ENCODE measurements at regions of chr19 and their contacts with region 1.

Region 1: GRCh38 chr19:41426952-41427646 is at the start of gene B3GNT8:
- DNase-seq: peak; percentile 88
- H3K4me3 ChIP-seq: peak within 1 kb of the TSS; percentile 47
- H3K4me3 Mint-ChIP-seq: peak within 1 kb of the TSS; percentile 72
- H3K27ac Mint-ChIP-seq: peak within 1 kb of the TSS; percentile 81
- H3K4me1 ChIP-seq: peaks cover 13% of the 10 kb centered on the region; the same call in 1 of the 2 replicates
- H3K4me1 Mint-ChIP-seq: peaks cover 19% of the 10 kb centered on the region
- H3K27me3 ChIP-seq: no peaks in the 10 kb centered on the region
- H3K27me3 Mint-ChIP-seq: no peaks in the 10 kb centered on the region
- CTCF ChIP-seq: no peak
- total RNA-seq, gene B3GNT8: 3.1 and 3.7 TPM in 2 replicates

Region 2: DNA sequence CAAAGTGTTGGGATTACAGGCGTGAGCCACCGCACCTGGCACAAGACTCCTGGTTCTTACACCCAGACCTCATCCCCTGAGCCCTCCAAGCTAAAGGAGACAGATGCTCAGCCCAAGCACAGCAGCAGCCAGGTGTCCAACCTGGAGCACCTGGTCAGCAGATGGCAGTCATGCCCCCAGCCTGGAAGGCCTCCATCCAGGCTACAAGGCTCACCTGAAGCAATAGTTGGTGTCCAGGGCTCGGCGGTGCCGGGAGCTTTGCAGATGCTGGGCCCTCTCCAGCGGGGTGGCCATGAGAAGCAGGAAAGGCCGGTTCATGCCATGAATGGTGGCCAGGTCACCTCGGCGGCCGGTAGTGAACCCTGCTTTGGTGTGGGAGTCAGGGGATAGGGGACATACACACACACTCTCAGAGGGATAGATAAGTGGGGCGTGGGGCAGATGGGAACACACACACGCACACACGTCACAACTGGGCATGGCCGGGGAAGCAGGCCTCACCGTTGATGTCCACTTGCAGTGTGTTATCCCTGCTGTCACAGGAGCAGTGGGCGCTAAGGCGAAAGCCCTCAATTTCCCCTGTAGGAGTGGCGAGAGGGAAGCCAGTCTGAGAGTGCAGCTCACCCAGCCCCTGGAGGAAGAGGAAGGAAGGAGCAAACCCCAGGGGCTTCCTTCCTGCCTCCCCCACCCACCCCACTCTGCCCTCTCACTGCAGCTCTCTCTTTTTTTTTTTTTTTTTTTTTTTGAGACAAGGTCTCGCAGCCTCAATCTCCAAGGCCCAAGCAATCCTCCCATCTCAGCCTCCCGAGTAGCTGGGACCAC is 85.2 kb before region 1 on chr19:
- CTCF ChIA-PET with region 1: interaction called, 5 read pairs
- POLR2A ChIA-PET with region 1: no interaction called
- intact Hi-C with region 1: loop called (anchors 1 kb)
- DNase-seq: peak; percentile 68 to 73
- H3K4me3 ChIP-seq: no peak overlapping the region
- H3K4me3 Mint-ChIP-seq: no peak overlapping the region
- H3K27ac Mint-ChIP-seq: no peak overlapping the region
- H3K4me1 ChIP-seq: no peaks in the 10 kb centered on the region
- H3K4me1 Mint-ChIP-seq: no peaks in the 10 kb centered on the region
- H3K27me3 ChIP-seq: no peaks in the 10 kb centered on the region
- H3K27me3 Mint-ChIP-seq: no peaks in the 10 kb centered on the region
- CTCF ChIP-seq: peak; percentile 53 to 84

Region 3: DNA sequence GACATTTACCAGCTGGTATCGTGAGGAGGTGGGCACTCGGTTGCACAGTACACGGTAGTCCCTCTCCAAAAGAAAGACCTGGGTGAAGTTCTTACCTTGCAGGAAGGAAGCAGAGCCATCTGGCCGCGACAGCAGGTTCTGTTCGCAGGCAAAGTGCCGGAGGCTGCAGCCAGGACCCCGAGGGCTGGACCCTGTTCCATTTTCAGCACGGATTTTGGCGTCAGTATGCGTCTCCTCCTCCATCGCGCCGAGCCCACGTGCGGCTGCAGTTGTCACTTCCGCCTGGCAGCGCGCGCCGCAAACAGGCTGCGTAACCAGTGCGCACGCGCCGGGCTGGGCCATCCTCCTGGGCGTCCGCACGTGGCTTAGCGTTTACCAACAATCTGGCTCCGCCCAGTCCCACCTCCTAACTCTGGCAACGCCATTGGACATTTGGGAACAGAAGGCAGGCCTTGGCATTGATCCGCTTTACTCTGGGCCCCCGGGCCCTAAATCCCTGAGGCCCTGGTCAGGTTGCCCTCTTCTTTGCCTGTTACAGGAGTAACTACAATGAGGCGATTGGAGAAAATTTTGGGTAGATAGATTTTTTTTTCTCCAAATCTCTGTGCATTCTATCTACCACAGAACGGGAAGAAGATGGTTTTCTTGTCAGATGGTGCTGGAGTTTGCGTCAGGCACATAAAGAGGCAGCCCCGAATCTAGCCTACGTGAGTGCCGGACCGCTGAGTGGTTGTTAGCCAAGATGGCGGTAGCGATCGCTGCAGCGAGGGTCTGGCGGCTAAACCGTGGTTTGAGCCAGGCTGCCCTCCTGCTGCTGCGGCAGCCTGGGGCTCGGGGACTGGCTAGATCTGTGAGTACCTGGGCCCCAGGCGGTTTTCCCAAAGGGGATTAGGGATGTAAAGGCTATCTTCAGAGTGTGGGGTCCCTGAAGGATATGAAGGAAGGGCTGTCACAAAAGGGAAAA is 29.7 kb before region 1 on chr19 and contains the starts of genes BCKDHA and EXOSC5:
- CTCF ChIA-PET with region 1: no interaction called
- POLR2A ChIA-PET with region 1: no interaction called
- intact Hi-C with region 1: loop called (anchors 1 kb)
- DNase-seq: peak; percentile 99 to 100
- H3K4me3 ChIP-seq: peak within 1 kb of the TSS; percentile 97
- H3K4me3 Mint-ChIP-seq: peak within 1 kb of the TSS; percentile 99
- H3K27ac Mint-ChIP-seq: peak within 1 kb of the TSS; percentile 100
- H3K4me1 ChIP-seq: 0 out of 2 replicates have a peak, but pooled peaks cover 6% of the 10 kb centered on the region
- H3K4me1 Mint-ChIP-seq: peaks cover 15% of the 10 kb centered on the region
- H3K27me3 ChIP-seq: no peaks in the 10 kb centered on the region; the same call in 1 of the 2 replicates
- H3K27me3 Mint-ChIP-seq: no peaks in the 10 kb centered on the region
- CTCF ChIP-seq: no peak
- total RNA-seq, gene BCKDHA: 9.4 and 19.4 TPM in 2 replicates
- total RNA-seq, gene EXOSC5: 36.6 and 37.3 TPM in 2 replicates

Region 4: GRCh38 chr19:41409288-41409687 is 17.8 kb before region 1 on chr19:
- CTCF ChIA-PET with region 1: interaction called, 7 read pairs
- POLR2A ChIA-PET with region 1: no interaction called
- intact Hi-C with region 1: loop called (anchors 1 kb)
- DNase-seq: peak; percentile 75 to 80
- H3K4me3 ChIP-seq: no peak overlapping the region
- H3K4me3 Mint-ChIP-seq: peak overlapping the region; percentile 59
- H3K27ac Mint-ChIP-seq: peak overlapping the region; percentile 89
- H3K4me1 ChIP-seq: peaks cover 15% of the 10 kb centered on the region
- H3K4me1 Mint-ChIP-seq: peaks cover 16% of the 10 kb centered on the region
- H3K27me3 ChIP-seq: no peaks in the 10 kb centered on the region
- H3K27me3 Mint-ChIP-seq: no peaks in the 10 kb centered on the region
- CTCF ChIP-seq: no peak

Region 5: GRCh38 chr19:41439441-41440222 is 12.5 kb after region 1 on chr19 and contains the start of gene DMAC2:
- CTCF ChIA-PET with region 1: interaction called, 8 read pairs
- POLR2A ChIA-PET with region 1: interaction called, 29 read pairs
- intact Hi-C with region 1: no loop called
- DNase-seq: peak; percentile 95 to 98
- H3K4me3 ChIP-seq: peak within 1 kb of the TSS; percentile 96
- H3K4me3 Mint-ChIP-seq: no peak within 1 kb of the TSS
- H3K27ac Mint-ChIP-seq: no peak within 1 kb of the TSS
- H3K4me1 ChIP-seq: no peaks in the 10 kb centered on the region
- H3K4me1 Mint-ChIP-seq: peaks cover 6% of the 10 kb centered on the region
- H3K27me3 ChIP-seq: no peaks in the 10 kb centered on the region
- H3K27me3 Mint-ChIP-seq: peaks cover 8% of the 10 kb centered on the region
- CTCF ChIP-seq: peak; percentile 20 to 58
- total RNA-seq, gene DMAC2: 75.9 and 85.0 TPM in 2 replicates

Region 6: DNA sequence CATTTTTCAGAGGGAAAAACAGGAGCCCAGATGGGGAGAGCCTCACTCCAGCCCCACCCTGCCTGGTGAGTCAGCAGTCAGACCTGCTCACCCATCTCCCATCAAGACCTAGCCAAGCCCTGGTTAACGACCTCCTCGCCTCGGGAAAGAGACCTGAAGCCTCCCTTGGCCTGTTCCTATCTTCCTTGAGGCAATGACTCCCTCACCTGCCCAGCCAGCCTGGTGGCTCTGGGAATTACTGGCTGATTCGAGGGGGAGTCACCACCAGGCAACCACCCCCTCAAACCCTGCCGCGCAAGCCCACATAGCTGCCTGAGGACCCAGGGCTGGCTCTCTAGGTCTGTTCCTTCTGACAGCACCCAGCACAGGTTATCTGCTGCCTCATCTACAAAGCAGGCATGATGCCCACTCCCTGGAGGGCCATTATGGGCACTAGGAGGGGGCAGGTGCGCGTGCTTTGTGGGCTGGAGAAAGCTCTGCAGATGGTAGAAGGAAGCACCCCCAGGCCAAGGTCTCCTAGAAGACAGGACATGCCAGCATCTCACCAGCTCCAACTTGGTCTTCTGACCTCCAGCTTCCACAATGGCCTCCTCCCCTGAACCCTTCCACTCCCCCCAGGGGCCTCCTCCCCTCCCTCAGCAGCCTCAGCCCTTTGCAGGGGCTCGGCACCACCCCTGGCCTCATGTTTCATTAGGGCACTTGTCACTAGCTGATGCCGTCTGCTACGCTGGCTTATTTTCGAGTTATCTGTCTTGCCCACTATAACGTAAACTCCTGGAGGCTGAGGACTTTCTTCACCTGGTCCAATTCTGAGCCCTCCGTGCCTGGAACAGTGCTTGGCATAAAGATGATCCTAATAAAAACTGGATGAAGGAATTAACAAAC is 780.0 kb after region 1 on chr19:
- CTCF ChIA-PET with region 1: no interaction called
- POLR2A ChIA-PET with region 1: interaction called, 10 read pairs
- intact Hi-C with region 1: no loop called
- DNase-seq: no peak
- H3K4me3 ChIP-seq: no peak overlapping the region
- H3K4me3 Mint-ChIP-seq: no peak overlapping the region
- H3K27ac Mint-ChIP-seq: no peak overlapping the region
- H3K4me1 ChIP-seq: 0 out of 2 replicates have a peak, but pooled peaks cover 5% of the 10 kb centered on the region
- H3K4me1 Mint-ChIP-seq: no peaks in the 10 kb centered on the region
- H3K27me3 ChIP-seq: no peaks in the 10 kb centered on the region
- H3K27me3 Mint-ChIP-seq: no peaks in the 10 kb centered on the region
- CTCF ChIP-seq: no peak

Measured in Caco-2 (cell line).